Activated B cell treated with CpG ODN at 0.5 μM for 24 hours (primary cell): ENCODE measurements at regions of chr10 and their contacts with region 1.

Region 1: DNA sequence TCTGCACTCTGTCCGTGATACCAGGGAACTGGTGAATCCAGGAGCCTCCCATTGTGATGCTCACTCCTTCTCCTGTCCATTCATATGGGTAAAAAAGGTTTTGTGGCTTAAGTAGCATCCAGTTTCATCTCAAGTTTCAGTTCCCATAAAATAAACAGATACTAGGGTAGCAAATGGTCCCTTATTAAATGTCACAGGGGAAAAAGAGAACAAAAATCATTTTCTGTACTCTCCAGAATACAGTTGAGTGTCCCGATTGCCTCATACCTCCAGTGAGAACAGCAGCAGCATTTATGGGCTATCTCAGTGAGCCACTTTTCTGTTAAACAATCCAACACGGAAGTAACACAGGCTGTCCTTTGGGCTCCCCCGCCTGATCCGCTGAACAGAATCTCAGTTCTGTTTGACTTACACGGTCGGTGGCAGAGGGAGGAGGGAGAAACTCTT is 179.6 kb downstream of the CELF2 start:
- DNase-seq: no peak
- ATAC-seq: peak; percentile 82
- H3K4me3 Mint-ChIP-seq: peak overlapping the region; percentile 81
- H3K27ac Mint-ChIP-seq: peak overlapping the region; percentile 94
- H3K4me1 Mint-ChIP-seq: peaks cover 97% of the 10 kb centered on the region
- H3K27me3 Mint-ChIP-seq: no peaks in the 10 kb centered on the region
- CTCF ChIP-seq: no peak

Region 2: GRCh38 chr10:11186374-11186773 is 10.9 kb before region 1 on chr10:
- CTCF ChIA-PET with region 1: no interaction called
- POLR2A ChIA-PET with region 1: interaction called, 7 read pairs
- intact Hi-C with region 1: loop called (anchors 1 kb)
- DNase-seq: no peak
- ATAC-seq: no peak
- H3K4me3 Mint-ChIP-seq: no peak overlapping the region
- H3K27ac Mint-ChIP-seq: peak overlapping the region; percentile 14
- H3K4me1 Mint-ChIP-seq: peaks cover 87% of the 10 kb centered on the region
- H3K27me3 Mint-ChIP-seq: no peaks in the 10 kb centered on the region
- CTCF ChIP-seq: no peak

Region 3: GRCh38 chr10:11209830-11210181 is 12.5 kb after region 1 on chr10:
- CTCF ChIA-PET with region 1: interaction called, 3 read pairs
- POLR2A ChIA-PET with region 1: interaction called, 4 read pairs
- intact Hi-C with region 1: loop called (anchors 1 kb)
- DNase-seq: no peak
- ATAC-seq: peak; percentile 30
- H3K4me3 Mint-ChIP-seq: peak overlapping the region; percentile 78
- H3K27ac Mint-ChIP-seq: peak overlapping the region; percentile 92
- H3K4me1 Mint-ChIP-seq: peaks cover 96% of the 10 kb centered on the region
- H3K27me3 Mint-ChIP-seq: no peaks in the 10 kb centered on the region
- CTCF ChIP-seq: no peak